MCF 10A (cell line): ENCODE measurements at regions of chr11 and their contacts with region 1.

Region 1: DNA sequence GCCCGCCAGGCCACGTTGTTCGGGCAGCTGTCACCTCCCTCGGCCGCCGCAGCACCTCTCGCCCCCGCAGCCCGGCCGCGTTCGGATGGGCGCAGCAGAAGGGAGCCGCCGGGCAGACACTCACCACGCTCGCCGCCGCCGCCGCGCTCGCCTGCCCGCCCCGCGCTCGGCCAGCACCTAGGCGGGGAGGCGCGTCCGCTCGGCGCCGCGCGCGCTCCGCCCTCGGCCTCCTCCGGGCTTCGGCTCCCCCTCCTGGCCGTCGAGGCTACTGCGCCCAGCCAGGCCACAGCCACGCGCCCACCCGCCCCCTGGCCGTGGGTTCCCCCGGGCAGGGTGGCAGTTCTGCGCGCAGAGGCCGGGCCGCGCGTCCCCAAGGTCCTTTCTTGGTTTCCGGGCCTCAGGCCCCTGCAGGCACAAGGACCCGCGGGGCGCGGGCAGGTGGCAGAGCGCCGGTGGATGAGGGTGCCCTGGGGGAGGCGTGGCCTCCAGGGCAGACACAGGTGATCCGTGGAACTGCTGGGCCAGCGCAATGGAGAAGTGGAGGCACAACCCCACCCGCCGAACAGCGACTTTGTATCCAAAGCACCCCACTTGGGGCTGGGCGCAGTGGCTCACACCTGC is at the start of gene SLC25A22:
- DNase-seq: peak; percentile 74
- H3K4me3 Mint-ChIP-seq: peak within 1 kb of the TSS; percentile 84
- H3K27ac Mint-ChIP-seq: peak within 1 kb of the TSS; percentile 94
- H3K4me1 Mint-ChIP-seq: no peaks in the 10 kb centered on the region
- H3K27me3 Mint-ChIP-seq: no peaks in the 10 kb centered on the region
- CTCF ChIP-seq: peak; percentile 88
- total RNA-seq, gene SLC25A22: 34.0 and 36.5 TPM in 2 replicates

Region 2: DNA sequence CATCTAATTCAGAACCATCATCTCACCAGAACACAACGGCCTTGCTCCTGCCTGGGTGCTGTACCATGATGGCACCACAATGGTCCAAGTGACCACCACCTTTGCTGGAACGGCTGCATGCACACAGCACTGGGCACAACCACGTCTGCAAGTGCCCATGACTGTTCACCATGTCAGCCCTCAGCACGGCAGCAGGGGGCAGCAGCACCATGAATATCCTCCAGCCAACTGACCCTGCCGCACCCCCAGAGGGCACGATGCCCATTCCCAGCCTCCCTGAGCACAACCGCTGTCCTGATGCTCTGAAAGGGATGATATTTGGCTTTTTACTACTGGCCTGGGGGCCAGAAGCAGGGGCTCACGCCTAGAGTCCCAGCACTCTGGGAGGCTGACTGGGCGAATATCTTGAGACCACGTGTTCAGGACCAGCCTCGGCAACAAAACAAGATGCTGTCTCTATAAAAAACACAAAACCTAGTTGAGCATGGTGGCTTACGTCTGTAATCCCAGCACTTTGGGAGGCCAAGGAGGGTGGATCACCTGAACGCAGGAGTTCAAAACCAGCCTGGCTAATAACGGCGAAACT is 135.4 kb before region 1 on chr11:
- CTCF ChIA-PET with region 1: no interaction called
- POLR2A ChIA-PET with region 1: no interaction called
- intact Hi-C with region 1: loop called (anchors 2 kb)
- DNase-seq: peak; percentile 62
- H3K4me3 Mint-ChIP-seq: no peak overlapping the region
- H3K27ac Mint-ChIP-seq: no peak overlapping the region
- H3K4me1 Mint-ChIP-seq: no peaks in the 10 kb centered on the region
- H3K27me3 Mint-ChIP-seq: no peaks in the 10 kb centered on the region
- CTCF ChIP-seq: peak; percentile 81

Region 3: GRCh38 chr11:747158-748006 is 50.8 kb before region 1 on chr11 and contains the start of gene TALDO1:
- CTCF ChIA-PET with region 1: interaction called, 3 read pairs
- POLR2A ChIA-PET with region 1: interaction called, 11 read pairs
- intact Hi-C with region 1: no loop called
- DNase-seq: peak; percentile 88
- H3K4me3 Mint-ChIP-seq: peak within 1 kb of the TSS; percentile 82
- H3K27ac Mint-ChIP-seq: peak within 1 kb of the TSS; percentile 63
- H3K4me1 Mint-ChIP-seq: peaks cover 4% of the 10 kb centered on the region
- H3K27me3 Mint-ChIP-seq: no peaks in the 10 kb centered on the region
- CTCF ChIP-seq: peak; percentile 15
- total RNA-seq, gene TALDO1: 93.8 and 137 TPM in 2 replicates

Region 4: GRCh38 chr11:777288-778255 is 20.6 kb before region 1 on chr11 and contains the start of gene GATD1:
- CTCF ChIA-PET with region 1: interaction called, 5 read pairs
- POLR2A ChIA-PET with region 1: interaction called, 23 read pairs
- intact Hi-C with region 1: no loop called
- DNase-seq: peak; percentile 84
- H3K4me3 Mint-ChIP-seq: peak within 1 kb of the TSS; percentile 85
- H3K27ac Mint-ChIP-seq: peak within 1 kb of the TSS; percentile 81
- H3K4me1 Mint-ChIP-seq: peaks cover 11% of the 10 kb centered on the region
- H3K27me3 Mint-ChIP-seq: no peaks in the 10 kb centered on the region
- CTCF ChIP-seq: no peak
- total RNA-seq, gene GATD1: 54.6 and 67.7 TPM in 2 replicates

Region 5: DNA sequence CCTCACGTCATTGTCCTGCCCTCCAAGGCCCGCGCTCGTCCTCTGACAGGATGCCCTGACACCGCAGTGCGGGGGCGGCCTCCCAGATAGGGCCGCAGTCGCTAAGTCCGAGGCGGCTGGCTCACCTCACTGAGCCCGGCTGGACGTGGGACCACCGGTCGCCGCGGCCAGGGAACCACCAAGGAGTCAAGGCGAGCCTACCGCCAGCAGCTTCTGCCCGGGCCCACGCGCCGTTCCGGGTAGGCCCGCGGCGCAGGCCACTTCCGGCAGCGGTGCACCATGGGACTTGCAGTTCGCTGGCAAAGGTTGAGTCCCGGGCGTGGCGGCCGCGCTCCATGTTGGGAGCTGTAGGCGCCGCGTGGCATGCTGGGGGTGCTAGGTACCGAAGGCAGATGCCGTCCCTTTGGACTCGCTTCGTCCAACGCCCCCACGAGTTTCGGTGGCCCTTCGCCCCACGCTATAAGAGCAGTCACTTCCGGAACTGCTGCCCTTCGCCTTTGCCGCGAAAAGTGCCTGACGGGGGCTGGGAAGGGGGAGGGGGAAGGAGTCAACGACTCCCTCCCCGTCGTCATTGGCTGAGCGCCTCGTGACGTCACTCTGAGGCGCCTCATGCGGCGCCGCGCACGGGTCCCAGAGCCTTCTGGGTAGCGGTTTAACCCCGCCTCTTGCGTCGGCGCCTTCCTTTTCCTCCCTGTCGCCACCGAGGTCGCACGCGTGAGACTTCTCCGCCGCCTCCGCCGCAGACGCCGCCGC is 11.3 kb after region 1 on chr11 and contains the start of gene RPLP2:
- CTCF ChIA-PET with region 1: no interaction called
- POLR2A ChIA-PET with region 1: interaction called, 33 read pairs
- intact Hi-C with region 1: no loop called
- DNase-seq: peak; percentile 97
- H3K4me3 Mint-ChIP-seq: peak within 1 kb of the TSS; percentile 95
- H3K27ac Mint-ChIP-seq: peak within 1 kb of the TSS; percentile 97
- H3K4me1 Mint-ChIP-seq: peaks cover 12% of the 10 kb centered on the region
- H3K27me3 Mint-ChIP-seq: no peaks in the 10 kb centered on the region
- CTCF ChIP-seq: no peak
- total RNA-seq, gene RPLP2: 1,886 and 2,142 TPM in 2 replicates

Region 6: DNA sequence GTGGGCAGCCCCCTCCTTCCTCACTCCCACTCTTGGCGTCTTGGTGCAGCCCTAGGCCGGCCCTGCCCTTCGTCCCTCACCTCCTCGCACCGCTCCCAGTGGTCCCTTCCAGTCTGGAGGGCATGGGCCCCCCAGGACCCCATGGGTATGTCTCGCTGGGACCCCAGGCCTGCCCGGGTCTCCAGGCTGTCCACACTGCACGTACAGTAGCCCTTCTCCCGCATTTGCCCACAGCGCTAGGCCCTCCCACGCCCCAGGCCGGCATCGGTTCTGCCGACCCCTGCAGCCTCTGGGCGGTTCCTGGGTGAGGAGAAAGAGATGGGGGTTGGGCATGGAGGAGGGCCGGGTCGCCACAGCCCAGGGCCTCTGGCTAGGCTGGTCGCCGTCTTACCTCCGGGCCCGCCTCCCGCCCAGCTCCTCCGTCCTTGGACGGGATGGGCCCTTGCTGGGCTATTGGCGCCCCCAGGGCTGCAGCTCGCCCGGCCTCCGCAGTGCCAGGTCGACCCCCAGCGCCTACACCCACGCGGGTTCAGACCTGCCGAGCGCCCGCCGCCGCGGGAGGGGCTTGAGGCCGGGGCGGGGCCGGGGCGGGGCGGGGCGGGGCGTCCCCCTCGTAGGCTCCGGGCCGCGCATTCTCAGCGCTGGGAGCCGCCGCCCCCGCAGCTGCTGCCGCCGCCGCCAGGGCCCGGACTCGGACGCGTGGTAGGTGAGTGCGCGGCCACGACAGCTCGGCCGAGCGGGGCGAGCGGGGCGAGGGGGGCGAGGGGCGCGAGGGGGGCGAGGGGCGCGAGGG is 34.3 kb after region 1 on chr11 and contains the start of gene CD151:
- CTCF ChIA-PET with region 1: no interaction called
- POLR2A ChIA-PET with region 1: interaction called, 17 read pairs
- intact Hi-C with region 1: no loop called
- DNase-seq: peak; percentile 68
- H3K4me3 Mint-ChIP-seq: peak within 1 kb of the TSS; percentile 81
- H3K27ac Mint-ChIP-seq: peak within 1 kb of the TSS; percentile 94
- H3K4me1 Mint-ChIP-seq: peaks cover 17% of the 10 kb centered on the region
- H3K27me3 Mint-ChIP-seq: no peaks in the 10 kb centered on the region
- CTCF ChIP-seq: no peak
- total RNA-seq, gene CD151: 404 and 412 TPM in 2 replicates

Region 7: DNA sequence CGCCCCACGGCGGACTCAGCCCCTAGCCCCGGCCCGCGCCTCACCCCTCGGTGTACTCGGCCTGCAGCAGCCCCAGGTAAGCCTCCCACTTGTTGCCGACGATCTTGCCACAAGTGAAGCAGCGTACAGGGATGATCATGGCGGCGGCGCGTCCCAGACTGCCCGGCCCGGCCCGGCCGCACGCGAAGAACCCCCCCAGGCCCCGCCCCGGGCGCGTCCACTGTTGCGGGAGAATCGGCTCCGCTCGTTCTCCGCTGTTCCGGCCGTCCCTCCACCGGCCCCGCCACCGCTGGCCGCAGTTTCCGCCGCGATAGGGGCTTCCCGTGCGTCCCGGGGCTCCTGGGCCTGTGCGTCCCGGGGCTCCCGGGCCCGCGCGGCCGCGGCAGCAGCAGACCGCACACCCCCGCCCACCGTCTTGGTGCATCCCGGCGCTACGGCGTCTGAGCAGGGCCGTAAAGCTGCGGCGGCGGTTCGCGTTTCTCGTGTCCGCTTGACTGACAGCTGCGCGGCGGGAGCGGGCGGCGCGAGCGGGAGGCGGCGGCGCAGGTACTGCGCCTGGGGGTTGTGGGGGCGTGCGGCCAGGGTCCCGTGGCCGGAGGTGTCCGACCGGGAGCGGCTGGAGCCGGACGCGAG is 44.3 kb after region 1 on chr11 and contains the starts of genes POLR2L and TSPAN4:
- CTCF ChIA-PET with region 1: interaction called, 5 read pairs
- POLR2A ChIA-PET with region 1: interaction called, 10 read pairs
- intact Hi-C with region 1: no loop called
- DNase-seq: peak; percentile 87
- H3K4me3 Mint-ChIP-seq: peak within 1 kb of the TSS; percentile 87
- H3K27ac Mint-ChIP-seq: peak within 1 kb of the TSS; percentile 90
- H3K4me1 Mint-ChIP-seq: peaks cover 31% of the 10 kb centered on the region
- H3K27me3 Mint-ChIP-seq: no peaks in the 10 kb centered on the region
- CTCF ChIP-seq: no peak
- total RNA-seq, gene POLR2L: 96.9 and 118 TPM in 2 replicates
- total RNA-seq, gene TSPAN4: 118 and 148 TPM in 2 replicates